GM10248 (cell line): ENCODE measurements at regions of chr4 and their contacts with region 1.

Region 1: GRCh38 chr4:123092586-123092985 is 170.2 kb upstream of the NUDT6 start:
- DNase-seq: no peak
- CTCF ChIP-seq: no peak

Region 2: DNA sequence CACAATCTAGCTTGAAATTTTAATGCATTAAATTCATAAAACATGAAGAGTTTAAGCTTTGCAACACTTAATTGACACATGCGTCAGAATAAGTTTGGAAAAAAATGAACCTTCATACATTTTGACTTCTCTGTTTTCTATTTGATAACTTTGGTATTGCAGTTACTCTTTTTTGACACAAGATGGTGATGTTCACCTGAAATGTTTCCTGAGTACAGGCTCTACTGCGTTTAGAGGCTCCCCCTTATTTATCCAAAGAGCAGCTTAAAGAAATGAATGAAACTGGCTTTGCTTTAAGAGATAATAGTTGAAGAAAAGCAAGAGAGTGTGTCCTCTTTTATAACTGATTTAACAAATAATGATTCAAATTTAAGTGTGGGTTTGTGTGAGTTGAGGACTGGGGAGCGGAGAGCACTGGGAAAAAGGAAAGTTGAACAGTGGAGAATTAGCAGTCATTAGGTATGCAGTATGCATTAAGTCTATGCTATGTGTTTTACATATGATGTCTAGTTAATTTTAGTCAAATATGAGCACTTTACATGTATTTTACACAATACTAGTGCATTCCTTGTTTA is 10.4 kb after region 1 on chr4:
- CTCF ChIA-PET with region 1: interaction called, 17 read pairs
- POLR2A ChIA-PET with region 1: no interaction called
- DNase-seq: peak; percentile 25
- CTCF ChIP-seq: peak; percentile 62

Region 3: GRCh38 chr4:123278755-123279154 is 186.2 kb after region 1 on chr4:
- CTCF ChIA-PET with region 1: no interaction called
- POLR2A ChIA-PET with region 1: no interaction called
- DNase-seq: no peak
- CTCF ChIP-seq: no peak